Caco-2 (cell line): ENCODE measurements at regions of chr2 and their contacts with region 1.

Region 1: GRCh38 chr2:216081487-216082116 is at the starts of genes PECR and TMEM169:
- DNase-seq: peak; percentile 85
- H3K4me3 ChIP-seq: peak within 1 kb of the TSS; percentile 98
- H3K4me3 Mint-ChIP-seq: peak within 1 kb of the TSS; percentile 86
- H3K27ac Mint-ChIP-seq: peak within 1 kb of the TSS; percentile 42
- H3K4me1 ChIP-seq: peaks cover 14% of the 10 kb centered on the region
- H3K4me1 Mint-ChIP-seq: peaks cover 6% of the 10 kb centered on the region
- H3K27me3 ChIP-seq: no peaks in the 10 kb centered on the region
- H3K27me3 Mint-ChIP-seq: no peaks in the 10 kb centered on the region
- CTCF ChIP-seq: no peak
- total RNA-seq, gene PECR: 29.1 and 42.0 TPM in 2 replicates
- total RNA-seq, gene TMEM169: 1.1 and 1.3 TPM in 2 replicates

Region 2: GRCh38 chr2:216031960-216032689 is 49.5 kb before region 1 on chr2:
- CTCF ChIA-PET with region 1: no interaction called
- POLR2A ChIA-PET with region 1: no interaction called
- intact Hi-C with region 1: loop called (anchors 1 kb)
- DNase-seq: no peak
- H3K4me3 ChIP-seq: no peak overlapping the region
- H3K4me3 Mint-ChIP-seq: no peak overlapping the region
- H3K27ac Mint-ChIP-seq: no peak overlapping the region
- H3K4me1 ChIP-seq: no peaks in the 10 kb centered on the region
- H3K4me1 Mint-ChIP-seq: no peaks in the 10 kb centered on the region
- H3K27me3 ChIP-seq: no peaks in the 10 kb centered on the region
- H3K27me3 Mint-ChIP-seq: no peaks in the 10 kb centered on the region
- CTCF ChIP-seq: no peak

Region 3: DNA sequence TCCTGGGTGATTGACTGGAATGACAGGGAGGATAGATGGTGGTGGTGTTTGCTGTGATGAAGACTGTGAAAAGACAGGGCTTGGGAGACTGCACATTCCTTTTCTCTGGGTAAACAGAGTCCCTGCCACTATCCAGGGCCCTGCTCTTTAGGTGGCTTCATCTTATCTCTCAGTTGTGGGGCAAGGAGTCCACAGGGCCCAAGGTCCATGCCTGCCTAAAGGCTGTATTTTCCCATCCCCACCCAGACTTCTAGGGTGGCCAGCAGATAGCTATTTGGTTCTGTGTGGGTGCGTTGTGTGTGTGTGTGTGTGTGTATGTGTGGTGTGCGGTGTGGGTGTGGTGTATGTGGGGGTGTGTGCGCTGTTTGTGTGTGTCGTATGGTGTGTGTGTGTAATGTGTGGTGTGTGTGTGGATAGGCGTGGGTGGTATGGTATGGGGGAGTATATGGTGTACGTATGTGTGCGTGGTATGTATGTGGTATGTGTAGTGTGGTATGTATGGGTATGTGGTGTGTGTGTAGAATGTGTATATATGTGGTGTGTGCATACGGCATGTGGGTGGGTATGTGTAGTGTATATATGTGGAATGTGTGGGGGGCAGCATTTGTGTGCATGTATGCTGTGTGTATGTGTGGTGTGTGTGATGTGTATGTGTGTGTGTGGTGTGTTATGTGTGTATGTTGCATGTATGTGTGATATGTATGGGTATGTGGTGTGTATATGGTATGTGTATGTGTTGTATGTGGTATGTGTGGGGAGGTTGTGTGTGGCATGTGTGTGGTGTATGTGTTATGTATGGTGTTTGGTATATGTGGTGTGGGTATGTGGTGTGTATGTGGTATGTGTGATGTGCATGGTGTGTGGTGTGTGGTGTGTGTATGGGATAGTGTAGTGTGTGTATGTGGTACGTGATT is 17.1 kb after region 1 on chr2:
- CTCF ChIA-PET with region 1: interaction called, 5 read pairs
- POLR2A ChIA-PET with region 1: interaction called, 9 read pairs
- intact Hi-C with region 1: loop called (anchors 1 kb)
- DNase-seq: no peak
- H3K4me3 ChIP-seq: no peak overlapping the region
- H3K4me3 Mint-ChIP-seq: no peak overlapping the region
- H3K27ac Mint-ChIP-seq: no peak overlapping the region
- H3K4me1 ChIP-seq: 0 out of 2 replicates have a peak, but pooled peaks cover 7% of the 10 kb centered on the region
- H3K4me1 Mint-ChIP-seq: no peaks in the 10 kb centered on the region
- H3K27me3 ChIP-seq: no peaks in the 10 kb centered on the region
- H3K27me3 Mint-ChIP-seq: no peaks in the 10 kb centered on the region
- CTCF ChIP-seq: no peak

Region 4: GRCh38 chr2:216108967-216109921 is 27.6 kb after region 1 on chr2 and contains the start of gene XRCC5:
- CTCF ChIA-PET with region 1: interaction called, 5 read pairs
- POLR2A ChIA-PET with region 1: interaction called, 5 read pairs
- intact Hi-C with region 1: loop called (anchors 1 kb)
- DNase-seq: peak; percentile 97
- H3K4me3 ChIP-seq: peak within 1 kb of the TSS; percentile 78
- H3K4me3 Mint-ChIP-seq: peak within 1 kb of the TSS; percentile 88
- H3K27ac Mint-ChIP-seq: peak within 1 kb of the TSS; percentile 93
- H3K4me1 ChIP-seq: peaks cover 39% of the 10 kb centered on the region
- H3K4me1 Mint-ChIP-seq: peaks cover 27% of the 10 kb centered on the region
- H3K27me3 ChIP-seq: no peaks in the 10 kb centered on the region
- H3K27me3 Mint-ChIP-seq: no peaks in the 10 kb centered on the region
- CTCF ChIP-seq: no peak
- total RNA-seq, gene XRCC5: 319 and 333 TPM in 2 replicates

Region 5: GRCh38 chr2:216114714-216115557 is 33.3 kb after region 1 on chr2:
- CTCF ChIA-PET with region 1: interaction called, 5 read pairs
- POLR2A ChIA-PET with region 1: interaction called, 3 read pairs
- intact Hi-C with region 1: loop called (anchors 1 kb)
- DNase-seq: peak; percentile 98 to 99
- H3K4me3 ChIP-seq: peak overlapping the region; percentile 33
- H3K4me3 Mint-ChIP-seq: peak overlapping the region; percentile 92
- H3K27ac Mint-ChIP-seq: peak overlapping the region; percentile 97
- H3K4me1 ChIP-seq: peaks cover 35% of the 10 kb centered on the region
- H3K4me1 Mint-ChIP-seq: peaks cover 33% of the 10 kb centered on the region
- H3K27me3 ChIP-seq: no peaks in the 10 kb centered on the region
- H3K27me3 Mint-ChIP-seq: no peaks in the 10 kb centered on the region
- CTCF ChIP-seq: peak; percentile 85 to 92

Region 6: GRCh38 chr2:216126943-216127342 is 45.3 kb after region 1 on chr2:
- CTCF ChIA-PET with region 1: no interaction called
- POLR2A ChIA-PET with region 1: no interaction called
- intact Hi-C with region 1: no loop called
- DNase-seq: no peak
- H3K4me3 ChIP-seq: no peak overlapping the region
- H3K4me3 Mint-ChIP-seq: no peak overlapping the region
- H3K27ac Mint-ChIP-seq: no peak overlapping the region
- H3K4me1 ChIP-seq: no peaks in the 10 kb centered on the region
- H3K4me1 Mint-ChIP-seq: no peaks in the 10 kb centered on the region
- H3K27me3 ChIP-seq: no peaks in the 10 kb centered on the region
- H3K27me3 Mint-ChIP-seq: no peaks in the 10 kb centered on the region
- CTCF ChIP-seq: no peak

Region 7: GRCh38 chr2:217785544-217786045 is 1704.0 kb after region 1 on chr2:
- CTCF ChIA-PET with region 1: no interaction called
- POLR2A ChIA-PET with region 1: no interaction called
- intact Hi-C with region 1: no loop called
- DNase-seq: peak; percentile 75 to 84
- H3K4me3 ChIP-seq: no peak overlapping the region
- H3K4me3 Mint-ChIP-seq: no peak overlapping the region
- H3K27ac Mint-ChIP-seq: no peak overlapping the region
- H3K4me1 ChIP-seq: no peaks in the 10 kb centered on the region
- H3K4me1 Mint-ChIP-seq: no peaks in the 10 kb centered on the region
- H3K27me3 ChIP-seq: no peaks in the 10 kb centered on the region
- H3K27me3 Mint-ChIP-seq: peaks cover 8% of the 10 kb centered on the region
- CTCF ChIP-seq: peak; percentile 96 to 97